ENCODE measurements at regions of chr1 and their contacts with region 1.

Region 1: GRCh38 chr1:22557341-22557950 is 5.8 kb upstream of the EPHA8 start:
- DNase-seq: no peak
- ATAC-seq: no peak
- H3K4me3 ChIP-seq: no peak overlapping the region
- H3K27ac ChIP-seq: no peak overlapping the region
- H3K4me1 ChIP-seq: no peaks in the 10 kb centered on the region
- H3K27me3 ChIP-seq: peaks cover 0 to 10% of the 10 kb centered on the region in 2 donors
- CTCF ChIP-seq: no peak
- POLR2A ChIP-seq: no peak

Region 2: GRCh38 chr1:22217861-22218381 is 339.5 kb before region 1 on chr1:
- intact Hi-C with region 1: no loop called
- DNase-seq: peak in 2 of 3 donors; percentile 25 to 45
- ATAC-seq: no peak
- H3K4me3 ChIP-seq: no peak overlapping the region
- H3K27ac ChIP-seq: no peak overlapping the region
- H3K4me1 ChIP-seq: no peaks in the 10 kb centered on the region
- H3K27me3 ChIP-seq: peaks cover 1 to 9% of the 10 kb centered on the region in 2 donors
- CTCF ChIP-seq: no peak
- POLR2A ChIP-seq: no peak

Region 3: DNA sequence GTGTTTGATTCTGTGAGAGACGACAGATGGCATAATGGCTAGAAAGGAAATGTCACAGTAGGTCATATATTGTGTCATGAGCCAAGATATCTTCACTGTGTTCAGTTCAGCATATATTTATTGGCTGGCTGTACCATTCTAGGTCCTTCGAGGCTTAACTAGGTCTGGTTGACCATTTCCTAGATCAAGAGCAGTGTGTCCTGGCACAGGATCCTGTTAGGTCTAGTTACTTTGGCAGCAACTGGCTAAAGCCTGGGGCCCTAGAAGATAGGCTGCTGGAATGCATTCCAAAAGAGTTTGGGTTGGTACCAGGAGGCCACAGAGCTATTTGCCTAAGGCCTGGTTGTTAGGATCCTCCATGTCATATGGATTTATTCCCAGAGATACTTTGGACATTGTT is 84.8 kb before region 1 on chr1:
- intact Hi-C with region 1: no loop called
- DNase-seq: peak in 1 of 3 donors; percentile 86
- ATAC-seq: peak; percentile 73 to 95 (median 89)
- H3K4me3 ChIP-seq: no peak overlapping the region
- H3K27ac ChIP-seq: peak overlapping the region in 2 of 3 donors; percentile 55 to 68
- H3K4me1 ChIP-seq: peaks cover 0 to 26% (median 12%) of the 10 kb centered on the region in 4 donors
- H3K27me3 ChIP-seq: no peaks in the 10 kb centered on the region
- CTCF ChIP-seq: no peak
- POLR2A ChIP-seq: no peak

Region 4: GRCh38 chr1:22488319-22488718 is 69.1 kb before region 1 on chr1:
- intact Hi-C with region 1: no loop called
- DNase-seq: no peak
- ATAC-seq: no peak
- H3K4me3 ChIP-seq: no peak overlapping the region
- H3K27ac ChIP-seq: no peak overlapping the region
- H3K4me1 ChIP-seq: peaks cover 0 to 14% (median 5%) of the 10 kb centered on the region in 4 donors
- H3K27me3 ChIP-seq: no peaks in the 10 kb centered on the region
- CTCF ChIP-seq: no peak
- POLR2A ChIP-seq: no peak

Region 5: GRCh38 chr1:22611530-22611947 is 54.1 kb after region 1 on chr1:
- intact Hi-C with region 1: loop called in 1 of 2 experiments (anchors 10 kb)
- DNase-seq: no peak
- ATAC-seq: peak in 3 of 4 donors; percentile 24 to 55 (median 25)
- H3K4me3 ChIP-seq: no peak overlapping the region
- H3K27ac ChIP-seq: no peak overlapping the region
- H3K4me1 ChIP-seq: no peaks in the 10 kb centered on the region
- H3K27me3 ChIP-seq: no peaks in the 10 kb centered on the region
- CTCF ChIP-seq: no peak
- POLR2A ChIP-seq: no peak

Region 6: GRCh38 chr1:22808676-22809483 is 251.4 kb after region 1 on chr1:
- intact Hi-C with region 1: no loop called
- DNase-seq: peak in 1 of 3 donors; percentile 43
- ATAC-seq: peak in 3 of 4 donors; percentile 25 to 56 (median 28)
- H3K4me3 ChIP-seq: no peak overlapping the region
- H3K27ac ChIP-seq: no peak overlapping the region
- H3K4me1 ChIP-seq: no peaks in the 10 kb centered on the region
- H3K27me3 ChIP-seq: no peaks in the 10 kb centered on the region
- CTCF ChIP-seq: no peak
- POLR2A ChIP-seq: no peak

Measured in right lobe of liver (tissue), 6 donors.